ENCODE measurements at regions of chr10 and their contacts with region 1.

Region 1: DNA sequence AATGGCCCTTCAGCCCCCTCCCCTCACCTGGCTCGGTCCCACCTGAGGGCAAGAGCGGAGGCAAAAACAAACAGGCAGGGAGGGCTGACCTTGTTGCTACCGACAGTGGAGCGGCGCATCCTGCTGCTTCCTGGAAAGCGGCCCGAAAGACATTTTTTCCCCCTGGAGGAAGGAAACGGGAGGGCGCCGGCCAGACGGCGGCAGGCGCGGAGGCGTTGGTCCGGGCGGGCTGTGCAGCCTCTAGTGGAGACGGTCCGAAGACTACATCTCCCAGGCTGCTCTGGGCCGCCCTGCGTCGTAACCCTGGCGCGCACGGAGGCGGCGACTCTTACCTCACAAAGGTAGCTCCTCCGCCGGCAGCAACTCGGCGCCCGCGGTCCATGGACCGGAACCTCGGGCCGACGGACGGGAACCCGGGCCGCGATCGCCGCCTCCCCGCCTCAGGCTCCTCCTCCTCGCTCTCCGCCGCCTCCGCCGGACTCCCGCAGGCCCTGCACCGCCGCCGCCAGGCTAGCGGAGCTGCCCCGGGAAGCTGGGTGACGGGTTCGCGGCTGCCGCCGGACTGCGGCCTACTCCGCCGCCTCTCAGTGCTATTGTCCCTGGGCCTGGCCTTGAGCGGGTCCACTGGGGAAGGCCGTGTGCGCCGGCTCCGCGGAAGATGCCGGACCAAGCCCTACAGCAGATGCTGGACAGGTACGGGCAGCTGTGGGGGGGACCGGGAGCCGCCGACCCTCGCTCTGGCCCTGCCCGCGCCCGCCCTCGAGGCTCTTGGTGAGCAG is at the starts of genes CPEB3 and MARCHF5:
- DNase-seq: peak; percentile 78 to 96 (median 90)
- ATAC-seq: peak; percentile 97
- H3K4me3 ChIP-seq: peak within 1 kb of the TSS; percentile 91 to 98
- H3K4me3 Mint-ChIP-seq: peak within 1 kb of the TSS; percentile 97
- H3K27ac ChIP-seq: peak within 1 kb of the TSS; percentile 70 to 83
- H3K27ac Mint-ChIP-seq: peak within 1 kb of the TSS; percentile 88
- H3K4me1 ChIP-seq: peaks cover 20% of the 10 kb centered on the region
- H3K4me1 Mint-ChIP-seq: peaks cover 36% of the 10 kb centered on the region
- H3K27me3 ChIP-seq: no peaks in the 10 kb centered on the region
- H3K27me3 Mint-ChIP-seq: no peaks in the 10 kb centered on the region
- CTCF ChIP-seq: peak; percentile 50
- total RNA-seq, gene CPEB3: 0.71 to 1.1 TPM
- total RNA-seq, gene MARCHF5: 48.3 to 48.9 TPM

Region 2: GRCh38 chr10:91923371-91924211 is 367.4 kb before region 1 on chr10 and contains the start of gene BTAF1:
- CTCF ChIA-PET with region 1: no interaction called
- POLR2A ChIA-PET with region 1: interaction called, 7 read pairs
- intact Hi-C with region 1: loop called in 1 of 2 experiments (anchors 1 kb)
- DNase-seq: peak; percentile 82 to 97 (median 93)
- ATAC-seq: peak; percentile 94
- H3K4me3 ChIP-seq: peak within 1 kb of the TSS; percentile 87 to 97
- H3K4me3 Mint-ChIP-seq: peak within 1 kb of the TSS; percentile 99
- H3K27ac ChIP-seq: peak within 1 kb of the TSS; percentile 92 to 97
- H3K27ac Mint-ChIP-seq: peak within 1 kb of the TSS; percentile 98
- H3K4me1 ChIP-seq: peaks cover 36% of the 10 kb centered on the region
- H3K4me1 Mint-ChIP-seq: peaks cover 50% of the 10 kb centered on the region
- H3K27me3 ChIP-seq: peaks cover 0 to 2% of the 10 kb centered on the region in 2 experiments
- H3K27me3 Mint-ChIP-seq: peaks cover 2% of the 10 kb centered on the region
- CTCF ChIP-seq: no peak
- total RNA-seq, gene BTAF1: 88.6 to 90.7 TPM

Region 3: DNA sequence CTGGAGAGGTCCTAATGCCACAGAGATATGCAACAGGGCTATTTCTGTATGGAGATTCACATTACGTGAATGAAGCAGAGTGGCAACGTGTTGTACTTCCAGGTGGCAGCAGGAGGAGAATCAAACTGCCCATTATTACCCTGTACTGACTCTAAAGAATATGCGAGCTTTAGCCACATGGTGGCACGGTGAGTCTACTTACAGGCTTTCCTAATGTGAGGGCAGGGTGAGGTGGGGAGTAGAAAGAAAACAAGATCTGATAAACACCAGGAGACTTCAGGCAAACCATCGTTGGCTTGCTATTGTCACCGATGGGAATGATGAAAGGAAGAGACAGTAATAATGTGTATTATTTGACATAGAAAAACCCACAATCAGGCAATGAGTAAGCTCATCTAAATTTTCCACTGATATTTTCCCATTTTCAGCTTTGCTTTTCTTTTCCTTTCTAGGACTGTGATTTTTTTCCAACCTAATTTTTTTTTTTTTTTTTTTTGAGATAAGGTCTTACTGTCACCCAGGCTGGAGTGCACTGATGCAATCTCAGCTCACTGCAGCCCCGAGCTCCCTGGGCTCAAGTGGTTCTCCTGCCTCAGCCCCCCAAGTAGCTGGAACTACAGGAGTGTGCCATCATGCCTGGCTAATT is 203.2 kb before region 1 on chr10:
- CTCF ChIA-PET with region 1: interaction called, 4 read pairs
- POLR2A ChIA-PET with region 1: no interaction called
- intact Hi-C with region 1: loop called (anchors 1 to 2 kb)
- DNase-seq: peak; percentile 14 to 66 (median 38)
- ATAC-seq: peak; percentile 96
- H3K4me3 ChIP-seq: no peak overlapping the region
- H3K4me3 Mint-ChIP-seq: no peak overlapping the region
- H3K27ac ChIP-seq: no peak overlapping the region
- H3K27ac Mint-ChIP-seq: no peak overlapping the region
- H3K4me1 ChIP-seq: no peaks in the 10 kb centered on the region
- H3K4me1 Mint-ChIP-seq: peaks cover 2% of the 10 kb centered on the region
- H3K27me3 ChIP-seq: no peaks in the 10 kb centered on the region
- H3K27me3 Mint-ChIP-seq: no peaks in the 10 kb centered on the region
- CTCF ChIP-seq: peak; percentile 55

Region 4: GRCh38 chr10:92240289-92241157 is 50.5 kb before region 1 on chr10:
- CTCF ChIA-PET with region 1: interaction called, 4 read pairs
- POLR2A ChIA-PET with region 1: interaction called, 6 read pairs
- intact Hi-C with region 1: loop called (anchors 1 kb)
- DNase-seq: peak in 8 of 9 experiments; percentile 14 to 74 (median 32)
- ATAC-seq: peak; percentile 43
- H3K4me3 ChIP-seq: peak overlapping the region; percentile 65 to 82
- H3K4me3 Mint-ChIP-seq: peak overlapping the region; percentile 95
- H3K27ac ChIP-seq: peak overlapping the region; percentile 3 to 56
- H3K27ac Mint-ChIP-seq: peak overlapping the region; percentile 81
- H3K4me1 ChIP-seq: peaks cover 22% of the 10 kb centered on the region
- H3K4me1 Mint-ChIP-seq: peaks cover 40% of the 10 kb centered on the region
- H3K27me3 ChIP-seq: no peaks in the 10 kb centered on the region
- H3K27me3 Mint-ChIP-seq: no peaks in the 10 kb centered on the region
- CTCF ChIP-seq: no peak

Region 5: DNA sequence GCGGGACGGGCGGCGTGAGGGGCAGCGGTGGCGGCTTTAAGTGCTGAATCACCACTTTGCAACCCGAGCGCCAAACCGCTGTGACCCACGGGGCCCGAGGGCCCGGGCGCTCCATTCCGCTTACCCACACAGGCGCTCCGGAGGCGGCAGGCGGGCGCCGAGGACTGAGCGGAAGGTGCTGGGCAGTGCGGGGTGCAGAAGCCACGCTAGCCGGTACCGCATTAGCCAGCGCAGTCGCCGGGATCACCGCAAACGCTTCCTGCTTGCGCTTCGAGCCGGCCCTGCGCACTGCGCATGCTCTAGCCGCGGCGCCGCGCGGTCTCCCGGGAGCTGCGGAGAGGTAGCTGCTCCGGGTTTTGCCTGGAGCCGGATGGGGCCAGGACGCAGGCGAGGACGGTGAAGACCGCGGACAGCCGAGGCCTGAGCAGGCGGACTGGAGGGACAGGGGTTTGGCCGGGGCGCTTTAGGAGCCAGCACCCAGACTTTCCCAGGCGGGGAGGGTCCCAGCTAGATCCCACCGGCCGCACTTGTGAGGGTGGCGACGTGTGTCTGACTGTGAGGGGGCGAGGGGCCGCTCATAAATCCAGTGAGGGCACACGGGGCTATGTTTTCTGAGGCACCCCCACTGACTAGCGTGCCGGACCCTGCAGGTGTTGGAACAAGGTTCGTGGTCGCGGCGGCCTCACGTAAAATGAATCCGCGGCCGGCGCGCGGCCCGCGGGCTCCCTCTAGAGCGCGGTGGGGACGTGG is 282.9 kb after region 1 on chr10 and contains the start of gene IDE:
- CTCF ChIA-PET with region 1: no interaction called
- POLR2A ChIA-PET with region 1: interaction called, 5 read pairs
- intact Hi-C with region 1: loop called (anchors 1 to 5 kb)
- DNase-seq: peak; percentile 43 to 89 (median 76)
- ATAC-seq: peak; percentile 70
- H3K4me3 ChIP-seq: peak within 1 kb of the TSS; percentile 85 to 100
- H3K4me3 Mint-ChIP-seq: peak within 1 kb of the TSS; percentile 93
- H3K27ac ChIP-seq: peak within 1 kb of the TSS; percentile 74 to 92
- H3K27ac Mint-ChIP-seq: peak within 1 kb of the TSS; percentile 93
- H3K4me1 ChIP-seq: peaks cover 18% of the 10 kb centered on the region
- H3K4me1 Mint-ChIP-seq: peaks cover 42% of the 10 kb centered on the region
- H3K27me3 ChIP-seq: no peaks in the 10 kb centered on the region
- H3K27me3 Mint-ChIP-seq: no peaks in the 10 kb centered on the region
- CTCF ChIP-seq: no peak
- total RNA-seq, gene IDE: 12.1 to 13.2 TPM

Region 6: GRCh38 chr10:93496322-93497041 is 1205.5 kb after region 1 on chr10 and contains the start of gene CEP55:
- CTCF ChIA-PET with region 1: no interaction called
- POLR2A ChIA-PET with region 1: no interaction called
- intact Hi-C with region 1: loop called in 1 of 2 experiments (anchors 10 kb)
- DNase-seq: peak; percentile 90 to 96 (median 95)
- ATAC-seq: peak; percentile 99
- H3K4me3 ChIP-seq: peak within 1 kb of the TSS; percentile 87 to 97
- H3K4me3 Mint-ChIP-seq: peak within 1 kb of the TSS; percentile 90
- H3K27ac ChIP-seq: peak within 1 kb of the TSS in 1 of 2 experiments; percentile 54
- H3K27ac Mint-ChIP-seq: no peak within 1 kb of the TSS
- H3K4me1 ChIP-seq: peaks cover 10% of the 10 kb centered on the region
- H3K4me1 Mint-ChIP-seq: peaks cover 14% of the 10 kb centered on the region
- H3K27me3 ChIP-seq: no peaks in the 10 kb centered on the region
- H3K27me3 Mint-ChIP-seq: peaks cover 10% of the 10 kb centered on the region
- CTCF ChIP-seq: no peak
- total RNA-seq, gene CEP55: 0.16 TPM in 1 of 2 experiments, not detected in the other

Measured in CD8-positive, alpha-beta T cell (primary cell).